ENCODE measurements at regions of chr19 and their contacts with region 1.

Region 1: DNA sequence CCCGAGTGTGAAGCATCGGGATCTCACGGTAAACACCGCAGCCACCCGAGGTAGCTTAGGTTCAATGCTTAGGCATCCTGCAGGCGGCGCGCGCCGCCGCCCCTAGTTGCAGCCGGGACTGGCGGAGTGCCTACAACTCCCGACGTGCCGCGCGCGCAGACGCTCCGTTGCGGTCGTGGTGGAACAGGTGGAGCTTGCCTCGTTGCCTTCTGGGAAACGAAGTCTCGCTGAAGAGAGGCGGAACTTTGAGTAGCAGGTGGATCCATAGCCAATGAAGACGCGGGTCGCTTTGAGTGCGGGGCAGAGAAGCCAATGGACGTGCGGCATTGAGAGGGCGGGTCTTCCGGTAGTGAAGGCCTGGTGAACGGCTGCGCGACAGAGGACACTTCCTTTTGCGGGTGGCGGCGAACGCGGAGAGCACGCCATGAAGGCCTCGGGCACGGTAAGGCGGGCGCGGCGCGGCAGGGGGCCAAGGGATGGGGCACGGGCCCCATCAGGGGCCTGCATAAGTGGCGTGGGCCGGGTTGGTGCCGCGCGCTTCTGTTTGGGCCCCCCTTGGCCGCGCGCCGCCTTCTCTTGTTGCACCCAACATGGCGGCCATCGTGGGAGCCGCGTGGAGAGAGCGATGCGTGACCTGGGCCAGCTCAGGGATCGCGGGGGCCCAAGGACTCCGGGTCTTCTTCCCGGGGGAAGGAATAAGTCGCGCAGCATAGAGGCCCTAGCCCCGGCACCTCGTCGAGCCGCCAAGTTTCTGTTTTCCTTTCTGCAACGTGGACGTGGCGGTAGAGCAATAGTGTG is at the start of gene RPL18A:
- DNase-seq: peak; percentile 99
- H3K4me3 ChIP-seq: peak within 1 kb of the TSS; percentile 67 to 97 (median 92)
- H3K27ac ChIP-seq: peak within 1 kb of the TSS; percentile 87 to 95 (median 91)
- H3K4me1 ChIP-seq: peaks cover 0 to 24% (median 21%) of the 10 kb centered on the region in 4 donors
- H3K27me3 ChIP-seq: no peaks in the 10 kb centered on the region
- CTCF ChIP-seq: peak in 3 of 4 experiments; percentile 68 to 74 (median 73)
- EP300 ChIP-seq: no peak
- POLR2A ChIP-seq: peak; percentile 93
- total RNA-seq, gene RPL18A: 1,686 to 2,372 (median 2,021) TPM

Region 2: GRCh38 chr19:17703824-17704463 is 155.8 kb before region 1 on chr19:
- intact Hi-C with region 1: loop called (anchors 10 kb)
- DNase-seq: no peak
- H3K4me3 ChIP-seq: no peak overlapping the region
- H3K27ac ChIP-seq: no peak overlapping the region
- H3K4me1 ChIP-seq: no peaks in the 10 kb centered on the region
- H3K27me3 ChIP-seq: peaks cover 0 to 25% (median 0%) of the 10 kb centered on the region in 3 donors
- CTCF ChIP-seq: peak; percentile 29 to 84 (median 66)
- EP300 ChIP-seq: no peak
- POLR2A ChIP-seq: no peak

Region 3: GRCh38 chr19:17747205-17748098 is 112.3 kb before region 1 on chr19:
- intact Hi-C with region 1: loop called (anchors 10 kb)
- DNase-seq: peak; percentile 95
- H3K4me3 ChIP-seq: peak overlapping the region; percentile 17 to 52 (median 45)
- H3K27ac ChIP-seq: no peak overlapping the region
- H3K4me1 ChIP-seq: peaks cover 0 to 18% (median 10%) of the 10 kb centered on the region in 4 donors
- H3K27me3 ChIP-seq: no peaks in the 10 kb centered on the region
- CTCF ChIP-seq: no peak
- EP300 ChIP-seq: no peak
- POLR2A ChIP-seq: no peak

Region 4: GRCh38 chr19:17873786-17874757 is 14.3 kb after region 1 on chr19:
- intact Hi-C with region 1: no loop called
- DNase-seq: no peak
- H3K4me3 ChIP-seq: no peak overlapping the region
- H3K27ac ChIP-seq: no peak overlapping the region
- H3K4me1 ChIP-seq: peaks cover 0 to 22% (median 20%) of the 10 kb centered on the region in 4 donors
- H3K27me3 ChIP-seq: peaks cover 38 to 80% (median 62%) of the 10 kb centered on the region in 3 donors
- CTCF ChIP-seq: no peak
- EP300 ChIP-seq: no peak
- POLR2A ChIP-seq: no peak

Region 5: DNA sequence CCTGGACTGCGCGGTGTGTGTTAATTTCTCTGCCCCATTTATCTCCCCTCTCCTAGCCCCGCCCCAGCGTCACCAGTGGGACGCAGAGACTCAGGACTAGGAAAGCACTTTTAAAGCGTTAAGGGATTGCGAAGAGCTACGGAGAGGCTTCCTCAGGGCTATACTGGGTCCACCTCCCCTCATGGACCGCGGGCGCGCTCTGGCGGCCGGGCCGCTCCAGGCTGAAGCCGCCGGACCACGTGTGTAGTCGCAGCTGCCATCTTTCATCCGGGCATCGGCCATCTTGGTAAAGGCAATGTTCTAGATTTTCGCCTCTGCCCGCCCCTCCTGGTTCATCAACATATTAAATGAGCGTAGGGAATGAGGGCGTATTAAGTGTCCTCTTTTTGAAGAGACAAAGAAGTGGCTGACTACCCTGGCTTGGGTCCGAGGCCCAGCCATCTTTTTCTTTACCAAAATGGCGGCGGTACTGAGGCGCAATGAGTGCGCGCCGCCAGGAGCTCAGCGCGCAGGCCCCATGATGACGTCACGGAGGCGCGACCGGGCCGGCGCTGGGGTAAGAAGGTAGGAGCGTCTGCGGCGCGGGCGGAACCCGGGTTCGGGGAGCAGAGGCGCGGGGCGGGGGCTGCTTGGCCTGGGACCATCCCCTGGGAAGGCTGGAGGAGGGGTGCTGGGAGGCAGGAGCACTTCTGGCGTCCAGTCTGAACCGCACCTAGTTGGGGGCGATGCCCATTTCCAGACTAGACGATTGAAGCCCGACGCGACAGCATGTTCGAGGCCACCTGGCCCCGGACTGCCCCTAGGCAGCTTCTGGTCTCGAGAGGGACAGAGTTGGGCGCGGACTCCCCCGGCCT is 73.0 kb after region 1 on chr19 and contains the start of gene CCDC124:
- intact Hi-C with region 1: loop called (anchors 1 kb)
- DNase-seq: peak; percentile 94
- H3K4me3 ChIP-seq: peak within 1 kb of the TSS; percentile 59 to 98 (median 88)
- H3K27ac ChIP-seq: peak within 1 kb of the TSS; percentile 77 to 88 (median 84)
- H3K4me1 ChIP-seq: peaks cover 0 to 23% (median 21%) of the 10 kb centered on the region in 4 donors
- H3K27me3 ChIP-seq: no peaks in the 10 kb centered on the region
- CTCF ChIP-seq: peak; percentile 70 to 90 (median 77)
- EP300 ChIP-seq: peak in 1 of 4 donors; percentile 1
- POLR2A ChIP-seq: peak; percentile 84 to 90
- total RNA-seq, gene CCDC124: 52.8 to 86.4 (median 73.1) TPM

Region 6: GRCh38 chr19:17996826-17997316 is 137.1 kb after region 1 on chr19:
- intact Hi-C with region 1: loop called (anchors 2 kb)
- DNase-seq: peak; percentile 92
- H3K4me3 ChIP-seq: no peak overlapping the region
- H3K27ac ChIP-seq: no peak overlapping the region
- H3K4me1 ChIP-seq: peaks cover 0 to 12% (median 11%) of the 10 kb centered on the region in 4 donors
- H3K27me3 ChIP-seq: no peaks in the 10 kb centered on the region
- CTCF ChIP-seq: peak; percentile 96 to 98 (median 97)
- EP300 ChIP-seq: no peak
- POLR2A ChIP-seq: no peak